Common myeloid progenitor, CD34-positive (primary cell): ENCODE measurements at regions of chr1 and their contacts with region 1.

Region 1: DNA sequence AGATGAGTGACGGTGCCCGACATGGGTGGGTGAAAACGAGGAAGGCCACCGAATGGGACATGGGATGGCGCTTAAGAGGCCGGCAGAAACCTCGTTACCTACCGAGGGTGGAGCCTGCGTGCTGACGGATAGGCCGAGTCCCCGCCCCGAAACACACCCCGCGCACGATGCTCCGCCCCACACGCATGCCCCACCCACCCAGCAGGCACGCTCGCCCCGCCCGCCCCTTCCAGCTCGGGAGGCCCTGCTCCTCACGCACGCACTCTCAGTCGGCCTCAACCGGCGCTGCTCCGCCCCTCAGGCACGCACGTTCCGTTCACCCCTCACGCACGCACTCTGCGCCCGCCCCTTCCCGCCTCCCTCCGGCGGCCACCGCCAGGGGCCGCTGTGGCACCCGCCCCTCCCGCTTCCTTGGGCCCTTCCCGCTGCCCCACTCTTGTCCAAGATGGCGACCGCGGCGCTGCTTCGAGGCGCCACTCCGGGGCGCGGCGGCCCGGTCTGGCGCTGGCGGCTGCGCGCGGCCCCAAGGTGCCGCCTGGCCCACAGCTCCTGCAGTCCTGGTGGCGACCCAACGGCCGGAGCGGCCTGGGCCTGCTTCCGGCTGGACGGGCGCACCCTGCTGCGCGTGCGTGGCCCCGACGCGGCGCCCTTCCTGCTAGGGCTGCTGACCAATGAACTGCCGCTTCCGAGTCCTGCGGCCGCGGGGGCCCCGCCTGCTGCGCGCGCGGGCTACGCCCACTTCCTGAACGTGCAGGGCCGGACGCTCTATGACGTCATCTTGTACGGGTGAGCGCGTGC is at the start of gene IBA57:
- DNase-seq: peak; percentile 99
- H3K4me3 ChIP-seq: peak within 1 kb of the TSS; percentile 49 to 88 (median 70)
- H3K27ac ChIP-seq: peak within 1 kb of the TSS; percentile 94 to 97
- H3K4me1 ChIP-seq: peaks cover 6 to 50% (median 45%) of the 10 kb centered on the region in 4 experiments
- H3K27me3 ChIP-seq: no peaks in the 10 kb centered on the region

Region 2: DNA sequence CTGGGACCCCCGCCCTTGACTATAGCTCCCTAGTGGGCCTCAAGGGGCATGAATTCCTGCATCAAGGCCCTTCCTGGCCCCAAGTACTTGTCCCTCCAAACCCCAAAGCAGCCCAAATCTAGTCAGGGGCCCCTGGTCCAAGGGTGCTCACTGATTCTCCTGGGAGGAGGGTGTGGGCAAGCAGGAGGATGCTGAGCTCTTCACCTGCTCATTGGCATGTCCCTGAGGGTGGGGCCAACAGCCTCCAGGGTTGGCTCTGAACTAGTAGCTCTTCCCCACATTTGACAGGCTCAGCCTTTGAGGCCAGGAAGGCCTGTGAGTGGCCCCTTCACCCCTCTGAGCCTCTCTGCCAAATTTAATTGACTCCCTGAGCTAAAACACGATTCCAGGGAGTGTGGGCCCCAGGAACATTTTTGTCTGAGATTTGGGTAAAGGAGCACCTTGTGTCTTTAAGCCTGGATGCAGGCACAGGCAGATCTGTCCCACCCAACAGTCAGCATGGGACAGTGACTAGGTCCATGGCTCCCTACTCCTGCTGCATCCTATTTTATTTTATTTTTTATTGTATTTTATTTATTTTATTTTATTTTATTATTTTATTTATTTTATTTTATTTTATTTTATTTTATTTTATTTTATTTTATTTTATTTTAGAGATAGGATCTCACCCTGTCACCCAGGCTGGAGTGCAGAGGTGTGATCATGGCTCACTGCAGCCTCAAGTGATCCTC is 206.8 kb before region 1 on chr1:
- CTCF ChIA-PET with region 1: no interaction called
- POLR2A ChIA-PET with region 1: no interaction called
- DNase-seq: no peak
- H3K4me3 ChIP-seq: no peak overlapping the region
- H3K27ac ChIP-seq: no peak overlapping the region
- H3K4me1 ChIP-seq: peaks cover 5 to 17% (median 16%) of the 10 kb centered on the region in 4 experiments
- H3K27me3 ChIP-seq: peaks cover 0 to 10% (median 0%) of the 10 kb centered on the region in 5 experiments

Region 3: DNA sequence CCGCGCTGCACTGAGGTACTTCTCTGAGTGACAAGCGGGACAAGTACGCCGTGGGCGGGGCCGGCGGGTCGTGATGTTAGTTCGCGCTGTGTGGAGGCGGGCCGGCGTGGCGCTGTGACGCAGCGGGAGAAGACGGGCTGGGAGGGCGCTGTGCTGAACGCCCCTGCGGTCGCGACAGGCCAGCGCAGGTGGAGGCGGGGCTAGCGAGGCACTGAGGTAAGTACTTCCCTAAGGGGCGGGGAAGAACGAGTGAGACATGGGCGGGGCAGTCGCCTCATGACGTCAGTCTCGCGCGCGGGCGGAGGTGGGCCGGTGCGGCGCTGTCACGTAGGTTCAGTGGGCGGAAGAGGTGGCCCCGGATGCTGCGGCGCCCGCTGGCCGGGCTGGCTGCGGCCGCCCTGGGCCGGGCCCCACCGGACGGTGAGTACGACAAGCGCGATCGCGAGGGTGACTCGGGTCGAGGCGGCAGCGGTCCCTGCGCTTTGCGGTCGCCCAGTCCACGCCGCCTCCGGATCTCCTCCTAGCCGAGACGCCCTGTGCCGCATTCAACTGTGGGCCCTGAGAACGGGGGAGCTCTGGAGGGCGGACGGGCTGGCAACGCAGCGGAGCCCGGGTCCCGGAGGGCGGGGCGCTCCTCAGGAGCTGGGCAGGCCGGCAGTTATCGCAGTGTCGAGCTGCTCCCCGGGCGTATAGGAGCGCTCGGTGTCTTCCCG is 25.5 kb before region 1 on chr1 and contains the start of gene GUK1:
- CTCF ChIA-PET with region 1: interaction called, 136 read pairs
- POLR2A ChIA-PET with region 1: interaction called, 10 read pairs
- DNase-seq: peak; percentile 100
- H3K4me3 ChIP-seq: peak within 1 kb of the TSS; percentile 74 to 97 (median 90)
- H3K27ac ChIP-seq: peak within 1 kb of the TSS; percentile 89 to 95
- H3K4me1 ChIP-seq: peaks cover 4 to 45% (median 41%) of the 10 kb centered on the region in 4 experiments
- H3K27me3 ChIP-seq: peaks cover 0 to 2% (median 0%) of the 10 kb centered on the region in 5 experiments

Region 4: DNA sequence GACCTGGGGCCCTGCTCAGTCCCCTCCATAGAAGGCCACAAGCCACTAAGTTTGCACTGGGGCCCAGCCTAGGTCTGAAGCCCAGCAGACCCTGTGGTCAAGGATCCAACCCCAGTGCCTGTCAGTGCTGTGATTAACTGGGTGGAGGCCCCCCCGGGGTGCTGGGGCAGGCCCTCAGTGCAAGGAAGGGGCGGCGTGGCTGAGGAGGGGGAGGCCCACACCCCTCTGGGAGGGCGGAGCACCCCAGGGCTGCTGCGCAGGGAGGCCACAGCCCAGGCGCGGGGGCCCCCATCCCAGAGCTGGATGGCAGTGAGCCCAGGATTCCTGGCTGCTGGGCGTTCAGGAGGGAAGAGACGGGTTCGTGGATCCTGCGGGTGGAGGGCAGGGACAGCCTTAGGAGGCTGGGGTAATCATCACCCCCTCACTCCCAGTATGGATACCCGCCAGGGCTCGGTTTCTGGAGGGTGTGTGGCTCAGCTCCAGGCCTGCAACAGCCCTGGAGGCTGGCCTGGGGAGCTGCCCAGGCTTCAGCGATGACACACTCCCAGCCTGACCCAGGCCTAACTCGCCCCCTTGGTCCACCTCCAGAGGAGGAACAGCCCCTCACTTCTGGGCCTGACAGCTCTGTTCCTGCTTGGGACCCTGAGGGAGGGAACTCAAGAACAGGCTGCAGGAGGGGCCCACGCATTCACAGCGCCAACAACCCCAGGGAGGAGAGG is 15.0 kb before region 1 on chr1:
- CTCF ChIA-PET with region 1: interaction called, 18 read pairs
- POLR2A ChIA-PET with region 1: interaction called, 3 read pairs
- DNase-seq: no peak
- H3K4me3 ChIP-seq: no peak overlapping the region
- H3K27ac ChIP-seq: no peak overlapping the region
- H3K4me1 ChIP-seq: peaks cover 0 to 10% (median 5%) of the 10 kb centered on the region in 4 experiments
- H3K27me3 ChIP-seq: no peaks in the 10 kb centered on the region

Region 5: DNA sequence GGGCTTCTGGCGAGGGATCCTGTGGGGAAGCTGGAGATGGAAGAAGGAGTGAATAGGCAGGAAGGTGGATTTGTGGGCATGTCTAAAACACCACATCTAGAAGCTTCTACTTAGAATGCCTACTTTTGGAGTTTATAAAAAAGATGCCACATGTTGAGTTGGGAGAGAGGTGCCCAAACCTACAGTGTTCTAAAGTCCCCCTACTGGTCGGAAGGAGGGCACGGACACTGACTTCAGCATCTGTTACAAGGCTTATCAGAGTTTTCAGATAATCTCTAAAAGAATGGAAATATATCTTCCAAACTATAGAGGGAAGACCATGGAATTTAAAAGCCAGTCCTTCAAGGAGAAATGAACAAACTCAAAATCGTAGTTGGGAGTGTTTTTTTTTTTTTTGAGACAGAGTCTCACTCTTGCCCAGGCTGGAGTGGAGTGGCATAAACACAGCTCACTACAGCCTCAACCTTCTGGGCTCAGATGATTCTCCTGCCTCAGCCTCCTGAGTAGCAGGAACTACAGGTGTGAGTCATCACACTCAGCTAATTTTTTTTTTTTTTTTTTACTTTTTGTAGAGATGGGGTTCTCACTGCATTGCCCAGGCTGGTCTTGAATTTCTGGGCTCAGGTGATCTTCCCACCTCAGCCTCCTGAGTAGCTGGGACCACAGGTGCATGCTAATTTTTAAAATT is 14.8 kb after region 1 on chr1:
- CTCF ChIA-PET with region 1: interaction called, 51 read pairs
- POLR2A ChIA-PET with region 1: interaction called, 7 read pairs
- DNase-seq: peak in 2 of 3 donors; percentile 64 to 69
- H3K4me3 ChIP-seq: no peak overlapping the region
- H3K27ac ChIP-seq: no peak overlapping the region
- H3K4me1 ChIP-seq: peaks cover 4 to 39% (median 27%) of the 10 kb centered on the region in 4 experiments
- H3K27me3 ChIP-seq: no peaks in the 10 kb centered on the region